H1 (cell line): ENCODE measurements at regions of chr2 and their contacts with region 1.

Region 1: GRCh38 chr2:18404708-18405107 is 155.7 kb downstream of the RDH14 start:
- DNase-seq: no peak
- H3K4me3 ChIP-seq: no peak overlapping the region
- H3K27ac ChIP-seq: no peak overlapping the region
- H3K4me1 ChIP-seq: no peaks in the 10 kb centered on the region
- H3K27me3 ChIP-seq: no peaks in the 10 kb centered on the region
- CTCF ChIP-seq: peak in 2 of 3 experiments; percentile 48 to 73; a peak in 3 of 4 replicates
- EP300 ChIP-seq: no peak
- POLR2A ChIP-seq: no peak
- RAD21 ChIP-seq: peak; percentile 42 to 54

Region 2: DNA sequence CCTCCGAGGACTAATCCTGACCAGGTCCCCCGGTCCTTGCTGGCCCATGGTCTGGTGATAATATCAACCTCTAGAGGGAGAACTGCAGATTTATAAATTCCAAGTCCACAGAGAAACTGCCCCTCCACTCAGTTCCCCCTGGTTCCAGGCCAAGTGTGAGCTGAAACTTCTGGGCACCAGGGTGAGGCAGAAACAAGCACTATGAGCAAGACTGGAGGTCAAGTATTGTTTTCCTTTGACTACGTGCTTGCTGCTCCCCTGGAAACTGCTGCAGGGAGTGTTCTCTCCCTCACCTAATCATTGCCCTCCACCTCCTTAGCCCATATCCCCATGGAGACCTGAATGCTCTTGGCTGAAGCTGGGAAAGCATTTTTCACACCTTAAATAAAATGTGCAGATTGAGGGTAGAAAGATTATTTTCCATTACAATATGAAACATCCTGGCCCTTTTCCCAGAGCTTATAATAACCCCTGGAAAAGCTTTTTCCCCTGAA is 20.5 kb after region 1 on chr2:
- CTCF ChIA-PET with region 1: interaction called, 11 read pairs
- POLR2A ChIA-PET with region 1: no interaction called
- DNase-seq: no peak
- H3K4me3 ChIP-seq: no peak overlapping the region
- H3K27ac ChIP-seq: no peak overlapping the region
- H3K4me1 ChIP-seq: no peaks in the 10 kb centered on the region
- H3K27me3 ChIP-seq: no peaks in the 10 kb centered on the region
- CTCF ChIP-seq: no peak
- EP300 ChIP-seq: no peak
- POLR2A ChIP-seq: no peak
- RAD21 ChIP-seq: no peak